ENCODE measurements at regions of chr9 and their contacts with region 1.

Region 1: DNA sequence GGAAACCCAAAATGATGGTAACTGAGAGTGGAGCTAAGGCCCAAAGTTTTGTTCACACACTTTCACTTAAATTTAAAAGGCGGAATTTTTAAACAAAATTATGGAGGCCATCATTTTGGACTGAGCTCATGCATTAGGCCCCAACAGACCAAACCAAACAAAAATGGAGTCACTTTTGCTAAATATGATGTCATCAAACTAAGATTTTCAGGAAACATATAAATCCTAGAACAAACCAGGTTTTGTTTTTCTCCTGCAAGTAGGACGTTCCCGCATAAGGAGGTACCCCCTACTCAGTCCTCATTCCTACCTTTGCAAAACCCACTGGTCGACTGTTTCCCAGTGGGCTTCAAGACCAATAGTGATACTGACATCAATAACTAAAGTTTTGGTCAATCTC is 474.2 kb downstream of the TUSC1 start:
- DNase-seq: no peak

Region 2: DNA sequence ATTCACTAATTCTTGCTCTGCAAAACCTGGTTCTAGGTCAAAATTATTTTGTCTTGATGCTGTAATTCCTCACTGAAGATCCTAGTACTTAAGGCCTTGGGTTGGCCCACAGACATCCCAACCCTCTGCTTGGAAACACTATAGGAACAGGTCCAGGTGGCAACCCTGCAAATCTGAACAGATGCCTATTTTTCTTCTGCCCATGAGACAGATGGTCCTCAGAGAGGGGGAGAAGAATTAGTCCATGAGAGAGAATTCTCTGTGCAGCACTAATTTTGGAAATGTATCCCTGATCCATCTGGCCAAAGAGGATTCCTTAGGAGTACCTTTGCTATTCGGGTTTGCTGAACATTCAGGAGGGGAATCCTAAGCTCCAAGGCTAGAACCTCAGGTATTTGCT is 1534.3 kb before region 1 on chr9:
- intact Hi-C with region 1: loop called in 1 of 2 experiments (anchors 5 kb)
- DNase-seq: no peak

Region 3: DNA sequence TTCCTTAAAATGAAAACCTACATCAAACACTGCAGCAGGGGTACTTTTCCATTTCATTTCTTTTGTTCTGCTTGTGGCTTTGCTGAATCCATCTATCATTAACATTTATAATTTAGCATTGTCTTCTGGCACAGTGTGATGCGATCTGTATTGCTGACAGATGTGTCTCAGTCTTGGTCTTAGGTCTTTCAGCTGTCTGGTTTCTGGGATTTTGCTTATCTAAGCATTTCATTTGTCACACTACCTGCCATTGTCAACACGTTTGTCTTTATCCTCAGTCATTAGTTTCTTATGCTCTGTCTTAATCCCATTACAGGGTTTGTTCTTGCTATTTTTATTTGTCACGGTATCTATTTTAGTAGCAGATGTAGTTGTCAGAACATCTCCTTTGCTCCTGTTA is 961.5 kb before region 1 on chr9:
- intact Hi-C with region 1: loop called in 1 of 2 experiments (anchors 5 kb)
- DNase-seq: no peak

Measured in posterior vena cava (tissue), 2 donors.